Naive thymus-derived CD8-positive, alpha-beta T cell (primary cell): ENCODE measurements at regions of chr3 and their contacts with region 1.

Region 1: DNA sequence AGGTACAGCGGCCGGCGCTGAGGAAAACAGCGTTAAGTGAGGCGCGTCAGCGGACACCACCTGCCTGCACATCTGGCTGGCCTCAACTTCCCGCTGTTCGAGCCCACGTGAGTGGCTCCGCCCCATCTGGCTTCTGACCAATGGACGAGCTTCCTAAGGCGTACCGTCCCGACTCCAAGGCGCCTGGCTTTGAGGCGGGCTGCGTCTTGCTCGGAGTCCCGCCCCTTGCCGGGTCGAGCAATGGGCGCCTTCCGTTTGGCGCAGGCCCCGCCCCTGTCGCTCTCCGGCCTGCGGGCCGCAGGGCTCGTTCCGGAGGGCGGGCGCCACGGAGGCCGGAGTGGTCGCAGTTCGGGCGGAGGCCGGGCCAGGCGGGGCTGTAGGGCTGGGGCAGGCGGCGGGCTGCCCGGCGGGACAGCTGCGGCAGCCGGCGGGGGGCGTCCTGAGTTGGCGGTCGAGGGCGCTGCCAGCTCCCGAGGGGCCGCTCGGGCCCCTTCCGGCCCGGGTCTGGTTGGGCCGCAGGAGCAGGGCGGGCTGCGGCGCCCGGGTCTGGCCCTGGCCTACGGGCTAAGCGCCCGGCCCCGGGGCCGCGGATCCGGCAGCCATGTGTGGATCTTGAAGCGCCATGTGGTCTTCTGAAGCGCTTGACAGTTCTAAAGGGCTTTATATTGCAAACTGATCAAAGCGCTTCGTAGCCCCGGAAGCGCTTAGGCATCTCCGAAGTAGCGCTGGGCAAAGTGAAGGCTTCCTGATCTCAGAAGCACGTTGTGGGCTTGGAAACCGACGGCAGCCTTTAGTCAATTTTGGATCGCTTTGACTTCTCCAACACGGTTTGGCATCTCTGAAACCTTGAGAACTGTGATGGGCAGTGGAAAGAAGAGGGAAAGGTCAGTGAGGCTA is at the start of gene TATDN2:
- DNase-seq: peak; percentile 82 to 96 (median 88)
- ATAC-seq: peak; percentile 91 to 93
- H3K4me3 Mint-ChIP-seq: peak within 1 kb of the TSS; percentile 95 to 100 (median 98)
- H3K27ac Mint-ChIP-seq: peak within 1 kb of the TSS; percentile 93 to 98 (median 96)
- H3K4me1 Mint-ChIP-seq: peaks cover 29 to 56% (median 49%) of the 10 kb centered on the region in 4 donors
- H3K27me3 Mint-ChIP-seq: no peaks in the 10 kb centered on the region
- polyA plus RNA-seq, gene TATDN2: 11.5 to 20.9 (median 14.5) TPM

Region 2: GRCh38 chr3:9876991-9877390 is 371.4 kb before region 1 on chr3:
- POLR2A ChIA-PET with region 1: no interaction called
- DNase-seq: peak in 1 of 10 donors; percentile 8
- ATAC-seq: peak; percentile 44 to 57
- H3K4me3 Mint-ChIP-seq: no peak overlapping the region
- H3K27ac Mint-ChIP-seq: no peak overlapping the region
- H3K4me1 Mint-ChIP-seq: no peaks in the 10 kb centered on the region
- H3K27me3 Mint-ChIP-seq: peaks cover 0 to 2% (median 0%) of the 10 kb centered on the region in 5 donors

Region 3: DNA sequence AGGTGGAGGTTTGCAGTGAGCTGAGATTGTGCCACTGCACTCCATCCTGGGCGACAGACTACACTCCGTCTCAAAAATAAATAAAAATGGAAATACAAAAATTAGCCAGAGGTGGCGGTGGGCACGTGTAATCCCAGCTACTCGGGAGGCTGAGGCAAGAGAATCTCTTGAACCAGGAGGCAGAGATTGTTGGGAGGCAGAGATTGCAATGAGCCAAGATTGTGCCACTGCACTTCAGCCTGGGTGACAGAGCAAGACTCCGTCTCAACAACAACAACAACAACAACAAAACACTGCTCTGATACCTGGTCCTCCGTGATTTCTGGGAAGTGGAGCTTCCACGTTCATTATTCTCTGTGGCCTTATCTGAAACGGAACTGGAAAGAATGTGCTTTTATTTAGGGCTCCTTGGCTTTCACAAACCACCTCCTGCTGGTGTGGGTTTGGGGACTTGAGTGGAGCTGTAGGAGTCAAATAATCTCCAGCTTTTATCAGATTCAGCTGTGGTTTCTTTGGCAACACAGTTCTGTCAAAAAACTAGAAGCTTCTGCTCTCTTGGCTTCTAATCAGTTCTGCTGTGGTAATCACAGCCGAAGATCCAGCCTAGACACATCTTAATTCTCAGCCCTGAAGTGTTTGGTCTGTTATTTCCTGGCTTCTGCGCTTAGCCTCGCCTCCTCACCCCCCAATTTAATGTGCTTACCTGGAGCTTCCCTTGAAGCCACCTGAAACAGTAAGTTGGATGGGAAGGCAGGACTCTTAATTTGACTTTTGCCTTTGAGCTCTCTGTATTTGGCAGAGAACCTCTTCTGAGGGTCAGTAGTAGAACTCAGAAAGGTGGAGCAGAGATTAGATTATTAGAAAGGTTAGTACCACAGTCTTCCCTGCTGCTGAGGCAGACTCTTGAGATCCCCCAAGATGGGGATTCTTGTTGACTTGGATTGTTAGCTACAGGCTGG is 62.3 kb before region 1 on chr3:
- POLR2A ChIA-PET with region 1: interaction called, 14 read pairs
- DNase-seq: peak in 4 of 10 donors; percentile 3 to 37 (median 30)
- ATAC-seq: peak; percentile 82 to 87
- H3K4me3 Mint-ChIP-seq: peak overlapping the region; percentile 12 to 75 (median 62)
- H3K27ac Mint-ChIP-seq: peak overlapping the region; percentile 29 to 96 (median 92)
- H3K4me1 Mint-ChIP-seq: peaks cover 27 to 74% (median 57%) of the 10 kb centered on the region in 4 donors
- H3K27me3 Mint-ChIP-seq: no peaks in the 10 kb centered on the region

Region 4: DNA sequence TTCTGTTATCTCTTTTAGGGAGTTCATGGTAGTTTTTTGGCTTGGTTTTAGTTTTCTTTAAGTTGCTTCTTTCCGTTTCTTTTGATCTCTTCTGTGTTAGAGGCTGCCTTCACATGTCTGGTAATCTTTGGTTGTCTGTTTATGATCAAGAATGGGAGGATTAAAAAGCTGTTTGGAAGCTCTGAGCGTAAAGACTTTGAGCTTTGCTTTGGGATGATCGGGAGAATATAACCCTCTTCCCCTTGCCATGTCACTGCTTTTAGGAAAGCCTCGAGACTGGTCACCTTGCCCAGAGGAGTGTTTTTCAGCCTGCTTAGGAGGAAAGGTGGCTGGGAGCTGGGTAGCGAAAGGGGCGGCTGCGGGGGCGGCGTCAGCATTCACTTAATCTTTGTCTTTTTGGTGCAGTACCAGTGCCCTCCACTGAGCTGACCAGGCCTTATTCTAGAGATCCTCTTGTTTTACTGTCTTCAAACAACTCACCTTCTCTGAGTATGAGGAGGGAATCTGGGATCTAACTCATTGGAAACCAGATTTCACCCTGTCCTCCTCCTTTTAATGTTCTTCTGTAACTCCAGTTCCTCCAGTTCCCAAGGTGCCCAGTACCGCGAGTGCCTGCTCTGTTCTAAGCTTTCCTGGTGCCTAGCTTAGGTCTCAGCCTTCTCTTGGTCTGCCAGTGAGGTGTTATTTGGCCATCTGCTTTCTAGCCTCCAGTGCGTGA is 15.4 kb after region 1 on chr3:
- POLR2A ChIA-PET with region 1: interaction called, 42 read pairs
- DNase-seq: peak; percentile 41 to 77 (median 60)
- ATAC-seq: peak; percentile 92 to 97
- H3K4me3 Mint-ChIP-seq: peak overlapping the region; percentile 70 to 81 (median 76)
- H3K27ac Mint-ChIP-seq: peak overlapping the region; percentile 71 to 97 (median 93)
- H3K4me1 Mint-ChIP-seq: peaks cover 51 to 92% (median 88%) of the 10 kb centered on the region in 4 donors
- H3K27me3 Mint-ChIP-seq: no peaks in the 10 kb centered on the region